Mammary epithelial cell (primary cell): ENCODE measurements at regions of chr1 and their contacts with region 1.

Region 1: GRCh38 chr1:165914136-165914798 is 86.9 kb downstream of the UCK2 start:
- DNase-seq: peak; percentile 62
- H3K4me3 ChIP-seq: no peak overlapping the region
- H3K27ac ChIP-seq: no peak overlapping the region
- H3K4me1 ChIP-seq: peaks cover 4% of the 10 kb centered on the region
- H3K27me3 ChIP-seq: no peaks in the 10 kb centered on the region
- CTCF ChIP-seq: peak; percentile 81 to 88

Region 2: DNA sequence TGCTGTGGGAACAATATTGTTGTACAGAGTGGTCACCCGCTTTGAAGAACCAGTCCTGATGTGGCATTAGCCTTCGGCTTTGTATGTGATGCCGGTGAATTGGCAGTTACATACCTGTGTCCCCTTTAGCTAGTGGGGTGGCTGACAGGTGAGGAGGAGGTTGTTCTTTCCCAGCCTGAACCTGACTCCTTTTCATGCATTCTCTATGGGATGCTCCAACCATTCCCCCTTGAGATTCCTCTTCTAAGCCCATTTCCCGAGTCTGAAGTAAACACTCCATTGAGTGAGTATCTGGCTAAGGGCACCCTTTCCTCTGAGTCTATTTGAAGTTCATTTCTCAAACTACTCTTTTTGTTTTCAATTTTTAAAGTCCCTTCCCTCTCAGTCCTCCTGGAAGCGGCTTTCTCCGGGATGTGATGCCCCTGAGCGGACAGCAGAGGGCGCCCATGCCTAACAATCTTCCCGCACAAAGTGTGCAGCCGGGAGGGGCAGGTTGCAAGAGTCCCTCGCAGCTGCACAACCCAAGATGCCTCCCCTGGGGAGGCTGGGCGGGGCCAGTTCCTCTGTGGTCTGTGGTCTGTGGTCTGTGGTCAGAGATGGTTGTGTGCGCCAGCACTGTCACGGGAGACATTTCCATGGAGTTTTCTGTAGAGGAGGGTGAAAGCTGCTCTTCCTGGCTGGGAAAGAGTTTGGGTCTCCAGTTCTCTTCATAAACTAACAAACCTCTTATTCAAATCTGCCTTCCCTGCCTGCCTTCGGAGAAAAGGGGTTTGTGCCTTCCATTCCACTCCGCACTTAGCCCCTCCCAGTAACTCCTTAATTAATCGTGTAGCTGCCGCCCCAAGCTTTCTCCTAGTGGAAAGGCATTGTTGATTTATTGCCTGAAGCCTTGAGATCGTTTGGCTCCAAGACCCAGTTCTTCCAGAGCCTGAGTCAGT is 521.4 kb before region 1 on chr1:
- CTCF ChIA-PET with region 1: no interaction called
- dilution Hi-C with region 1: no loop called
- in situ Hi-C with region 1: loop called in 1 of 2 experiments (anchors 25 kb)
- intact Hi-C with region 1: loop called (anchors 2 kb)
- DNase-seq: peak; percentile 87
- H3K4me3 ChIP-seq: no peak overlapping the region
- H3K27ac ChIP-seq: no peak overlapping the region
- H3K4me1 ChIP-seq: peaks cover 6% of the 10 kb centered on the region
- H3K27me3 ChIP-seq: peaks cover 41% of the 10 kb centered on the region
- CTCF ChIP-seq: peak; percentile 87 to 95

Region 3: GRCh38 chr1:165737196-165737595 is 177.1 kb before region 1 on chr1:
- CTCF ChIA-PET with region 1: no interaction called
- dilution Hi-C with region 1: no loop called
- in situ Hi-C with region 1: no loop called
- intact Hi-C with region 1: no loop called
- DNase-seq: no peak
- H3K4me3 ChIP-seq: no peak overlapping the region
- H3K27ac ChIP-seq: no peak overlapping the region
- H3K4me1 ChIP-seq: no peaks in the 10 kb centered on the region
- H3K27me3 ChIP-seq: no peaks in the 10 kb centered on the region
- CTCF ChIP-seq: no peak

Region 4: GRCh38 chr1:165768513-165769394 is 145.5 kb before region 1 on chr1 and contains the start of gene TMCO1:
- CTCF ChIA-PET with region 1: no interaction called
- dilution Hi-C with region 1: no loop called
- in situ Hi-C with region 1: no loop called
- intact Hi-C with region 1: loop called (anchors 1 kb)
- DNase-seq: peak; percentile 97
- H3K4me3 ChIP-seq: peak within 1 kb of the TSS; percentile 66 to 87 (median 82)
- H3K27ac ChIP-seq: peak within 1 kb of the TSS; percentile 88
- H3K4me1 ChIP-seq: peaks cover 27% of the 10 kb centered on the region
- H3K27me3 ChIP-seq: no peaks in the 10 kb centered on the region
- CTCF ChIP-seq: peak in 1 of 2 donors; percentile 33
- total RNA-seq, gene TMCO1: 79.0 to 80.9 TPM

Region 5: DNA sequence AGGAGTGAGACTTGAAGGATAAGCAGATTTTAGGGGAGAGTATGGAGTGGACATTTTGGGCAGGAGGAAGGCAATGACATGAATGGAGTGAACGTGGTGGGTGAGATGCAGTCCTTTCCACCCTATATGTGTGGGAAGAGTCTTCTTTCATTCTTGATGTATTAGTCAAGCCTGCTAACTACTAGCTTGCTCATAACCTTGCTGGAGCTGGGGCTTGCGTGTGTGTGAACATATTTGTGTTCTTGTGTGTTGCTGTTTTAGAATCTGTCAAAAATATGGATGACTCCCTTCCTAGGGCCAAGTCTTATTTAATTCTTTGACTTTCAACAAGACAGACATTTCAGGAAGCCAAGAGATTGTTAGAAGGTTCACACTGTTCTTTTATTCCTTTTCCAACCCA is 45.9 kb after region 1 on chr1:
- CTCF ChIA-PET with region 1: no interaction called
- dilution Hi-C with region 1: no loop called
- in situ Hi-C with region 1: no loop called
- intact Hi-C with region 1: no loop called
- DNase-seq: no peak
- H3K4me3 ChIP-seq: no peak overlapping the region
- H3K27ac ChIP-seq: no peak overlapping the region
- H3K4me1 ChIP-seq: no peaks in the 10 kb centered on the region
- H3K27me3 ChIP-seq: no peaks in the 10 kb centered on the region
- CTCF ChIP-seq: no peak

Region 6: GRCh38 chr1:166040202-166040997 is 126.1 kb after region 1 on chr1:
- CTCF ChIA-PET with region 1: no interaction called
- dilution Hi-C with region 1: no loop called
- in situ Hi-C with region 1: no loop called
- intact Hi-C with region 1: no loop called
- DNase-seq: no peak
- H3K4me3 ChIP-seq: no peak overlapping the region
- H3K27ac ChIP-seq: no peak overlapping the region
- H3K4me1 ChIP-seq: no peaks in the 10 kb centered on the region
- H3K27me3 ChIP-seq: no peaks in the 10 kb centered on the region
- CTCF ChIP-seq: no peak